Caco-2 (cell line): ENCODE measurements at regions of chr6 and their contacts with region 1.

Region 1: DNA sequence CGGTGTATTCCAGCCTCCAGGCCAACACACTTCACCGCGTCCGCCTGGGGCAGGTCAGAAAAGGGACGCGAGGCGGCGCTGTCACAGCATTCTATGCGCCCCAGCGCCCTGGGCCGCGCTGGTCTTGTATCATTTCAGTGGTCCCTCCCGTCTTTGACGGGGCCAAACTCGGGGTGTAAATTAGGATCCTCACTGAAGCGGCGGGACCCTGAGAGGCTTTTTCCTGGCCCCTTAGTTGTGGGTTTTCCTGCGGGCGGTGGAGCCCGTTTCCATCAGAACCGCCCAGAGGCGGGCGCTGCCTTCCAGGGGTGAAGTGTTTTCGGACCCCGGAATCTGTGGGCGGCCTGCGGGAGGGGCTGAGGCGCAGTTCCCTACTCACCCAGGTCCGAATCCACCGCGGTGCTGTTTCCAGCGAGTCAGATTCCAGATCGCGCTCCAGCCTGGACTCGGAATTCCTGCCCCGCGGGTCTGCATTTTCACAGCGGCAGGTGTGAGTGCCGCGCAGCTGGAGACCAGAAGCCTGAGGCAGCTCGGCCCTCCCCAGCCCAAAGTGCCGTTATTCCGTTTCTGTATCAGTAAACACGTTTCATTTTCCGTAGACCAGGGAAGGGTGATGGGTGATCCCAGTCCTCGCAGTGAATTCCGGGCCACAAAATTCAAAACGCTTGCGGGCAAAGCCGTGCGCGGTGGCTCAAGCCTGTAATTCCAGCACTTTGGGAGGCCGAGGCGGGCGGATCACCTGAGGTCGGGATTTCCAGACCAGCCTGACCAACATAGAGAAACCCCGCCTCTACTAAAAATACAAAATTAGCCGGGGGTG is 3.9 kb upstream of the MICB start:
- DNase-seq: peak; percentile 77 to 82
- H3K4me3 ChIP-seq: peak overlapping the region; percentile 55
- H3K4me3 Mint-ChIP-seq: peak overlapping the region; percentile 41
- H3K27ac Mint-ChIP-seq: no peak overlapping the region
- H3K4me1 ChIP-seq: no peaks in the 10 kb centered on the region
- H3K4me1 Mint-ChIP-seq: peaks cover 23% of the 10 kb centered on the region
- H3K27me3 ChIP-seq: no peaks in the 10 kb centered on the region
- H3K27me3 Mint-ChIP-seq: peaks cover 19% of the 10 kb centered on the region
- CTCF ChIP-seq: peak; percentile 83 to 89

Region 2: GRCh38 chr6:31403283-31403989 is 90.6 kb before region 1 on chr6 and contains the start of gene MICA:
- CTCF ChIA-PET with region 1: interaction called, 5 read pairs
- POLR2A ChIA-PET with region 1: no interaction called
- intact Hi-C with region 1: loop called (anchors 10 kb)
- DNase-seq: peak; percentile 91 to 93
- H3K4me3 ChIP-seq: peak within 1 kb of the TSS; percentile 56
- H3K4me3 Mint-ChIP-seq: peak within 1 kb of the TSS; percentile 89
- H3K27ac Mint-ChIP-seq: peak within 1 kb of the TSS; percentile 33
- H3K4me1 ChIP-seq: peaks cover 6% of the 10 kb centered on the region
- H3K4me1 Mint-ChIP-seq: peaks cover 36% of the 10 kb centered on the region
- H3K27me3 ChIP-seq: no peaks in the 10 kb centered on the region
- H3K27me3 Mint-ChIP-seq: no peaks in the 10 kb centered on the region
- CTCF ChIP-seq: no peak
- total RNA-seq, gene MICA: 12.6 and 13.1 TPM in 2 replicates

Region 3: GRCh38 chr6:31525932-31526591 is 32.0 kb after region 1 on chr6:
- CTCF ChIA-PET with region 1: no interaction called
- POLR2A ChIA-PET with region 1: interaction called, 3 read pairs
- intact Hi-C with region 1: loop called (anchors 5 kb)
- DNase-seq: no peak
- H3K4me3 ChIP-seq: no peak overlapping the region
- H3K4me3 Mint-ChIP-seq: no peak overlapping the region
- H3K27ac Mint-ChIP-seq: no peak overlapping the region
- H3K4me1 ChIP-seq: no peaks in the 10 kb centered on the region
- H3K4me1 Mint-ChIP-seq: peaks cover 9% of the 10 kb centered on the region
- H3K27me3 ChIP-seq: no peaks in the 10 kb centered on the region
- H3K27me3 Mint-ChIP-seq: no peaks in the 10 kb centered on the region
- CTCF ChIP-seq: no peak

Region 4: GRCh38 chr6:31597006-31597405 is 102.9 kb after region 1 on chr6:
- CTCF ChIA-PET with region 1: interaction called, 4 read pairs
- POLR2A ChIA-PET with region 1: no interaction called
- intact Hi-C with region 1: loop called (anchors 1 kb)
- DNase-seq: peak in 1 of 2 experiments; percentile 52
- H3K4me3 ChIP-seq: no peak overlapping the region
- H3K4me3 Mint-ChIP-seq: no peak overlapping the region
- H3K27ac Mint-ChIP-seq: no peak overlapping the region
- H3K4me1 ChIP-seq: no peaks in the 10 kb centered on the region
- H3K4me1 Mint-ChIP-seq: peaks cover 5% of the 10 kb centered on the region
- H3K27me3 ChIP-seq: no peaks in the 10 kb centered on the region
- H3K27me3 Mint-ChIP-seq: no peaks in the 10 kb centered on the region
- CTCF ChIP-seq: peak; percentile 34 to 38

Region 5: GRCh38 chr6:31643818-31644454 is 149.9 kb after region 1 on chr6:
- CTCF ChIA-PET with region 1: no interaction called
- POLR2A ChIA-PET with region 1: no interaction called
- intact Hi-C with region 1: no loop called
- DNase-seq: no peak
- H3K4me3 ChIP-seq: no peak overlapping the region
- H3K4me3 Mint-ChIP-seq: no peak overlapping the region
- H3K27ac Mint-ChIP-seq: no peak overlapping the region
- H3K4me1 ChIP-seq: no peaks in the 10 kb centered on the region
- H3K4me1 Mint-ChIP-seq: no peaks in the 10 kb centered on the region
- H3K27me3 ChIP-seq: no peaks in the 10 kb centered on the region
- H3K27me3 Mint-ChIP-seq: no peaks in the 10 kb centered on the region
- CTCF ChIP-seq: no peak

Region 6: DNA sequence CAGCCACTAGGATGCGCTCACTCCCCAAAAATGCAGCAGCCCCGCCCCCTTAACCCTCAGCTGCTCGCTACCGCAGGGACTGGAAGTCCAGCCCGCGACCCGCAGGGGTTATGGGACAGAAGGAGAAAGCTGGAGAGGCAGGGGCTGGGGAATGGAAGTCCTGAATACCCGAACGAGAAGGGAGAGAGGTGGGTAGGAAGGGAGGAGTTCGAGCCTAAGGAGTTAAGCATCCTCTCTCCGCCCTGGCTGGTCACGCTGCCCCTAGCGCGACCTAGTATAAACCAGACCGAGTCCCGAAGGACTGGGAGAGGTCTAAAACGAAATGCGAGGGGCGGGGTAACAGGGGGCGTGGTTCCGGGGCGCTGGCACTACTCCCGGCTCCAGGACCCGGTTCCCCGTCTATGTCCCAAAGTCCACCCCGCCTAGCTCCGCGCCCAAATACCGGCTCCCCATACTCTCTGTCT is 235.5 kb after region 1 on chr6:
- CTCF ChIA-PET with region 1: no interaction called
- POLR2A ChIA-PET with region 1: no interaction called
- intact Hi-C with region 1: no loop called
- DNase-seq: peak; percentile 94
- H3K4me3 ChIP-seq: peak overlapping the region; percentile 58
- H3K4me3 Mint-ChIP-seq: peak overlapping the region; percentile 87
- H3K27ac Mint-ChIP-seq: peak overlapping the region; percentile 84
- H3K4me1 ChIP-seq: peaks cover 13% of the 10 kb centered on the region
- H3K4me1 Mint-ChIP-seq: peaks cover 27% of the 10 kb centered on the region
- H3K27me3 ChIP-seq: no peaks in the 10 kb centered on the region
- H3K27me3 Mint-ChIP-seq: no peaks in the 10 kb centered on the region
- CTCF ChIP-seq: peak; percentile 75 to 89